PC-9 (cell line): ENCODE measurements at regions of chr6 and their contacts with region 1.

Region 1: DNA sequence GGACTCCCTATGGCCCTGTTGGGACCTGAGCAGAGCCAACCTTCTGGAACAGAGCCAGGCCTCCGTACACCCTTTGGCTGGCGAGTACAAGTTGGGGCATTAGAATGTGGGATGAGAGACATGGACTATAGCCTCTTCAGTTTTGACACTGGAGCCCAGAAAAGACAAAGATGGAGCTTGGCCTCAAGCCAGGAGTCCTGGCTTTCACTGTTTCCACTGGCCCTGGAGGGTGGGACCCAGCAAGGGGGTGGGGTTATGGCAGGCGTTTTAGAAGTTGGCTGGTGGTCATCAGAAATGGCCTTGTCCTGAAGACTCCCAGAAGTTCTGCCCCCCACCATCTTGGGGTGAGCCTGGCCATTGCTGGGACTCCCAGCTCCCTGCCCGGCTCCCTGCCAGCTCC is 21.8 kb downstream of the ITPR3 start:
- DNase-seq: no peak
- H3K4me3 ChIP-seq: no peak overlapping the region
- H3K27ac ChIP-seq: no peak overlapping the region
- H3K4me1 ChIP-seq: no peaks in the 10 kb centered on the region
- H3K27me3 ChIP-seq: no peaks in the 10 kb centered on the region
- CTCF ChIP-seq: no peak

Region 2: DNA sequence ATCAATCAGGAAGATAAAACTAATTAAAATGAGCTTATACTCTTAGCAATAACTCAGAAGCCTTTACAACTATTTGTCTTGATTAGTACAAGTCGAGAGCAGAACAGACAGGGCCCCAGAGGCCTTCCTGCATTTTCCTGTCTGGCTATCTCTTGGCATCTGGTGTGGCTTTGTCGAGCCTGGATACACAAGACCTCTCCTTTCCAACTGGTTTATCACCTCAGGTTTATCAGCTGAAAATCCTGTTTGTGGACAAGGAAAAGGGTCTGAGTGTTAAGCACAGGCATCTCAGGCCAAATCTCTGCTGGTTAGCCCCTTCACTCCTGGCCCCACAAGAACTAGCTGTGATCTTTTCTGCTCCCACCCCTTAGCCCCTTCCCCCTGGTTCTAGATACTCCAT is 95.4 kb before region 1 on chr6:
- CTCF ChIA-PET with region 1: no interaction called
- POLR2A ChIA-PET with region 1: no interaction called
- intact Hi-C with region 1: no loop called
- DNase-seq: no peak
- H3K4me3 ChIP-seq: no peak overlapping the region
- H3K27ac ChIP-seq: no peak overlapping the region
- H3K4me1 ChIP-seq: no peaks in the 10 kb centered on the region
- H3K27me3 ChIP-seq: no peaks in the 10 kb centered on the region
- CTCF ChIP-seq: no peak

Region 3: GRCh38 chr6:33869826-33870423 is 227.0 kb after region 1 on chr6:
- CTCF ChIA-PET with region 1: no interaction called
- POLR2A ChIA-PET with region 1: interaction called, 11 read pairs
- intact Hi-C with region 1: no loop called
- DNase-seq: no peak
- H3K4me3 ChIP-seq: no peak overlapping the region
- H3K27ac ChIP-seq: no peak overlapping the region
- H3K4me1 ChIP-seq: no peaks in the 10 kb centered on the region
- H3K27me3 ChIP-seq: peaks cover 94% of the 10 kb centered on the region
- CTCF ChIP-seq: no peak